PC-9 (cell line): ENCODE measurements at regions of chr4 and their contacts with region 1.

Region 1: DNA sequence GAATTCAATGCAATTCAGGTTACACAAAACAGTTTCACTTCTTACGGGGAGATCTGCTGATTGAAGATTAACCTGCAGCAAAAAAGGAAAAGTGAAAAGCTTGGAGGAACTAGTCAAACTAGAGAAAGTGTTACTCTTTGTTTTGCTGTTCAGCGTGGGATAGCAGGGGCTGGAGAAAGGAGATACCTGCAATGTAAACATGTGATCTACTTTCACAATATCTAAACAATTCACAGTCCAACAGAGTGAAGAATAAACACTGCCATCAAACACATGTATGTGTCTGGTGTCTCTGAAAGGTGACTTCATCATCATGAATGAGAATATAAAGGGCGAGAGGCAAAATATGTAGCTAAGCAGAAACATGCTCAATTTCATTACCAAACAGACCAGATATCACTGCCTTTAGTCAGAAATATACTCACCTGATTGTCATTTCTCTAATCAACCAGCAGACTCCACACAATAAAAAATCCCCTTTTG is 26.4 kb downstream of the NIPAL1 start:
- DNase-seq: no peak
- H3K4me3 ChIP-seq: no peak overlapping the region
- H3K27ac ChIP-seq: no peak overlapping the region
- H3K4me1 ChIP-seq: 0 out of 2 replicates have a peak, but pooled peaks cover 4% of the 10 kb centered on the region
- H3K27me3 ChIP-seq: no peaks in the 10 kb centered on the region
- CTCF ChIP-seq: no peak

Region 2: DNA sequence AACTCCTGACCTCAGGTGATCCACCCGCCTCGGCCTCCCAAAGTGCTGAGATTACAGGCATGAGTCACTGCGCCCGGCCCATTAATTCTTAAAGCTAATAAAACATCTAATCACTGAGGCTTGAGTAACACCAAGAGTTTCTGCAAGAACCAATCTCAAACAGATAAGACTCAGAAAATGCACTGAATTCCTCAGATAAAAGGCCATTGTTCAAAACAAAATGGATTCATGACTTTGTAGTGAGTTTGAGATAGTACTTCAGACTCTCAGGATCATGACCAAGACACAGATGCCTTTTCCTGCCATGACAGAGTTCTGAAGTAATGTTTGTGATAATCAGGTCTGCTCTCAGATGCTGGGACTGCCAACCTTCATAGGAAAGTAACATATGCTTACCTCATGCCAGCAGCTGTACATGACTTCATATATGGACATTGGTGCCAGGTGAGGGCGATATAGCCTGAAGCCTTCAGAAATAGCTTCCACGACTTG is 28.1 kb after region 1 on chr4:
- CTCF ChIA-PET with region 1: interaction called, 11 read pairs
- POLR2A ChIA-PET with region 1: interaction called, 3 read pairs
- intact Hi-C with region 1: no loop called
- DNase-seq: peak in 1 of 2 experiments; percentile 53
- H3K4me3 ChIP-seq: no peak overlapping the region
- H3K27ac ChIP-seq: no peak overlapping the region
- H3K4me1 ChIP-seq: peaks cover 24% of the 10 kb centered on the region
- H3K27me3 ChIP-seq: no peaks in the 10 kb centered on the region
- CTCF ChIP-seq: no peak